Breast epithelium (tissue), 4 donors: ENCODE measurements at regions of chr9 and their contacts with region 1.

Region 1: GRCh38 chr9:113657703-113658544 is 194.4 kb downstream of the RGS3 start:
- DNase-seq: peak; percentile 70 to 90
- H3K4me3 ChIP-seq: no peak overlapping the region
- H3K27ac ChIP-seq: no peak overlapping the region
- H3K4me1 ChIP-seq: peaks cover 0 to 7% of the 10 kb centered on the region in 2 donors
- H3K27me3 ChIP-seq: no peaks in the 10 kb centered on the region
- CTCF ChIP-seq: peak; percentile 94 to 97 (median 96)
- POLR2A ChIP-seq: no peak

Region 2: GRCh38 chr9:113446323-113446740 is 211.6 kb before region 1 on chr9:
- intact Hi-C with region 1: loop called (anchors 5 kb)
- DNase-seq: no peak
- H3K4me3 ChIP-seq: no peak overlapping the region
- H3K27ac ChIP-seq: no peak overlapping the region
- H3K4me1 ChIP-seq: no peaks in the 10 kb centered on the region
- H3K27me3 ChIP-seq: no peaks in the 10 kb centered on the region
- CTCF ChIP-seq: peak; percentile 47 to 77 (median 76)
- POLR2A ChIP-seq: no peak

Region 3: GRCh38 chr9:113593682-113594281 is 64.1 kb before region 1 on chr9:
- intact Hi-C with region 1: loop called (anchors 2 kb)
- DNase-seq: peak; percentile 77 to 95
- H3K4me3 ChIP-seq: peak overlapping the region; percentile 38 to 65 (median 64)
- H3K27ac ChIP-seq: peak overlapping the region; percentile 90 to 91
- H3K4me1 ChIP-seq: peaks cover 9 to 10% of the 10 kb centered on the region in 2 donors
- H3K27me3 ChIP-seq: no peaks in the 10 kb centered on the region
- CTCF ChIP-seq: no peak
- POLR2A ChIP-seq: peak; percentile 58